ENCODE measurements at regions of chr17 and their contacts with region 1.

Region 1: DNA sequence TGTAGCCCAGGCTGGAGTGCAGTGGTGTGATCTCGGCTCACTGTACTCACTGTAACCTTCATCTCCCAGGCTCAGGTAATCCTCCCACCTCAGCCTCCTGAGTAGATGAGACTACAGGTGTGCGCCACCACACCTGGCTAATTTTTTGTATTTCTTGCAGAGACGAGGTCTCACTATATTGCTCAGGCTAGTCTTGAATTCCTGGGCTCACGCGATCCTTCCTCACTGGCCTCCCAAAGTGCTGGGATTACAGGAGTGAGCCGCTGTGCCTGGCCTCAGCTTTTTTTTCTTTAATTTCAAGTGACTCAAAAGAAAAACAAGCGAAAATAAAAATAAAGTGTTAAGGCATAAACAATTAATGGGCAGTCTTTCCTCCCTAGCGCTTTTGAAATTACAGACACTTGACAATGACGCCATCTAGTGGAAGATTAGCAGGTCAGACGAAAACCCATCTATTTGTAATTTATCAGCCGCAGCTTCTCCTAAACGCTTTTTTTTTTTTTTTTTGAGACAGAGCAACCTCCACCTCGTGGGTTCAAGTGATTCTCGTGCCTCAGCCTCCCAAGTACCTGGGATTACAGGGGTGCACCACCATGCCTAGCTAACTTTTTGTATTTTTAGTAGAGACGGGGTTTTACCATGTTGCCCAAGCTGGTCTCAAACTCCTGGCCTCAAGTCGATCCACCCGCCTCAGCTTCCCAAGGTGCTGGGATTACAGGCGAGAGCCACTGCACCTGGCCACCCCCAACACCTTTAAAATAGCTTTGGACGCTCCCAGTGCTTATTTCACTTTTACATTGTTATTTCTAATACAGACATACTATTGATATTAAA is 28.1 kb upstream of the PECAM1 start:
- DNase-seq: no peak
- H3K4me3 ChIP-seq: no peak overlapping the region
- H3K27ac ChIP-seq: no peak overlapping the region
- H3K4me1 ChIP-seq: peaks cover 4 to 9% (median 7%) of the 10 kb centered on the region in 4 donors
- H3K27me3 ChIP-seq: no peaks in the 10 kb centered on the region
- CTCF ChIP-seq: peak; percentile 79 to 80 (median 79)
- EP300 ChIP-seq: no peak
- POLR2A ChIP-seq: no peak

Region 2: DNA sequence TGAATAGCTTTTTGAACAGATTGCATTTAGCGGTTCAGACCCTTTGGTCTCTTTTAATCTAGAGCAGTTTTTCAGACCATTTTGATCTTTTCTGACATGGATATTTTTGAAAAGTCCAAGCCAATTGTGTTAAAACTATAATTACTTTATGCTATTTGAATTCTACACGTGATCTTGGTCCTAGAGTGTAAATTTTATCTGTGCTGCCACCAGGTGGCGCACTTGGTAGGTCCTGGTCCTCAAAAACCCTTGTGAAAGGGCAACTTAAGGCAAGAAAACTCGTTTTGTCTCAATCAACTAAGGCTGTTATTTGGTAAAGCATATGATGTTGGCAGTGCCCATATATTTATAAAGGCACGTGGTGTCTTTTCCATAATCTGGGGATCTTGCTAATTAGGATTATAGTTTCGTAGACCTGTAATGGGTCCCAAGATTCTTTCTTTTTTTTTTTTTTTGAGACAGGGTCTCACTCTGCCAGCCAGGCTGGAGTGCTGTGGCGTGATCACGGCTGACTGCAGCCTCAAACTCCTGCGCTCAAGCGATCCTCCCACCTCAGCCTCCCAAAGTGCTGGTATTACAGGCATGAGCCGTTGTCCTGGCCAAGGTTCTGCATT is 111.8 kb before region 1 on chr17:
- intact Hi-C with region 1: loop called (anchors 5 kb)
- DNase-seq: no peak
- H3K4me3 ChIP-seq: no peak overlapping the region
- H3K27ac ChIP-seq: no peak overlapping the region
- H3K4me1 ChIP-seq: peaks cover 0 to 10% (median 1%) of the 10 kb centered on the region in 4 donors
- H3K27me3 ChIP-seq: no peaks in the 10 kb centered on the region
- CTCF ChIP-seq: peak; percentile 77 to 81 (median 77)
- EP300 ChIP-seq: no peak
- POLR2A ChIP-seq: no peak

Region 3: GRCh38 chr17:64320613-64321553 is 97.8 kb before region 1 on chr17:
- intact Hi-C with region 1: loop called (anchors 1 kb)
- DNase-seq: no peak
- H3K4me3 ChIP-seq: peak overlapping the region in 2 of 4 donors; percentile 10 to 36
- H3K27ac ChIP-seq: peak overlapping the region in 3 of 4 donors; percentile 25 to 27 (median 26)
- H3K4me1 ChIP-seq: peaks cover 13 to 28% (median 23%) of the 10 kb centered on the region in 4 donors
- H3K27me3 ChIP-seq: no peaks in the 10 kb centered on the region
- CTCF ChIP-seq: peak; percentile 74 to 79 (median 77)
- EP300 ChIP-seq: no peak
- POLR2A ChIP-seq: no peak